Breast epithelium (tissue), 4 donors: ENCODE measurements at regions of chr6 and their contacts with region 1.

Region 1: DNA sequence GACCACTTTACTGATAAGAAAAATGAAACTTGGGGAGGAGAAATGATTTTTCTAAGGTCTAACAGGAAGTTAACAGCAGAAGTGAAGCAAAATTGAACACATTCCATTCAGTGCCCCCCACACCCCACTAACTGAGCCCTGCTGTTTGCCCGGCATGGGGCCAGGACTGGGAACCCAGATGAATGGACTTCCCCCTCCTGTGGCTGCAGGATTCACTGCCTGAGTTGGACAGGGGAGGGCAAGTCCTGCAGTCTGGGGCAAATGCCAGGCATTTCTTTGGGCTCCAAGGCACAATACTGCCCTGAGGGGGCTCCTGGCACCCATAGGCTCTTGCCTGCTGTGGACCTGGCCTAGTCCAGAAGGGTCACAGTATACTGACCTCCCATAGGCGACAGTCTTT is 28.3 kb downstream of the FYN start:
- DNase-seq: no peak
- H3K4me3 ChIP-seq: no peak overlapping the region
- H3K27ac ChIP-seq: peak overlapping the region in 1 of 2 donors; percentile 23
- H3K4me1 ChIP-seq: no peaks in the 10 kb centered on the region
- H3K27me3 ChIP-seq: no peaks in the 10 kb centered on the region
- CTCF ChIP-seq: no peak
- POLR2A ChIP-seq: no peak

Region 2: GRCh38 chr6:111812060-111813038 is 32.6 kb before region 1 on chr6:
- intact Hi-C with region 1: loop called (anchors 1 kb)
- DNase-seq: no peak
- H3K4me3 ChIP-seq: no peak overlapping the region
- H3K27ac ChIP-seq: no peak overlapping the region
- H3K4me1 ChIP-seq: no peaks in the 10 kb centered on the region
- H3K27me3 ChIP-seq: no peaks in the 10 kb centered on the region
- CTCF ChIP-seq: no peak
- POLR2A ChIP-seq: no peak

Region 3: GRCh38 chr6:112037783-112038216 is 192.9 kb after region 1 on chr6:
- intact Hi-C with region 1: no loop called
- DNase-seq: peak in 1 of 2 donors; percentile 48
- H3K4me3 ChIP-seq: no peak overlapping the region
- H3K27ac ChIP-seq: peak overlapping the region; percentile 54 to 86
- H3K4me1 ChIP-seq: peaks cover 0 to 4% of the 10 kb centered on the region in 2 donors
- H3K27me3 ChIP-seq: no peaks in the 10 kb centered on the region
- CTCF ChIP-seq: no peak
- POLR2A ChIP-seq: no peak